Activated CD4-positive, alpha-beta T cell treated with anti-CD3 and anti-CD28 coated beads for 36 hours (primary cell): ENCODE measurements at regions of chr1 and their contacts with region 1.

Region 1: GRCh38 chr1:160261893-160262794 is at the start of gene DCAF8:
- DNase-seq: peak; percentile 99
- ATAC-seq: peak; percentile 88
- H3K4me3 Mint-ChIP-seq: peak within 1 kb of the TSS; percentile 100
- H3K27ac Mint-ChIP-seq: peak within 1 kb of the TSS; percentile 99
- H3K4me1 Mint-ChIP-seq: peaks cover 44% of the 10 kb centered on the region
- H3K27me3 Mint-ChIP-seq: no peaks in the 10 kb centered on the region
- total RNA-seq, gene DCAF8: 116 to 135 TPM

Region 2: DNA sequence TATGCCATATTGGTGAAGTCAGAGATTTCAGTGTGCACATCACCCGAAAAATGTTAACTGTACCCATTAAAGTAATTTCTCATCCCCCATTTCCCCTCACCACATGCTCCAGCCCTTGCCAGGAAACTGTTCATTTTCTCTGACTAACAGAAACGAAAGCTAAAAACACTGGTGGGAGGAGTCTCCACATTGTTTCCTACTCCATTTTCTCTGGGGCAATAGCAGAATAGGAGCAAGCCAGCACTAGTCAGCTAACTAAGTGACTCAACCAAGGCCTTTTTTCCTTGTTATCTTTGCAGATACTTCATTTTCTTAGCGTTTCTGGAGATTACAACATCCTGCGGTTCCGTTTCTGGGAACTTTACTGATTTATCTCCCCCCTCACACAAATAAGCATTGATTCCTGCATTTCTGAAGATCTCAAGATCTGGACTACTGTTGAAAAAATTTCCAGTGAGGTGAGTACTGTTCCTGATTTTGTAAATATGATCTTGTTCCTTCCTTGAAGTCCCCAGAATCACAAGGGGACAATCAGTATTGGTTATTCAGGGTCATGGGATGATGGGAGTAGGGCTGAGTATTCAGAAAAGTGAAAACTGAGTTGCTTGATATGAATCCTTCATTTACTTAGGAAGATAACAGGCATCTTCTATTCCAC is 1252.3 kb before region 1 on chr1 and contains the start of gene IFI16:
- CTCF ChIA-PET with region 1: no interaction called
- POLR2A ChIA-PET with region 1: no interaction called
- intact Hi-C with region 1: loop called in 1 of 2 experiments (anchors 5 kb)
- DNase-seq: peak; percentile 75
- ATAC-seq: peak; percentile 70
- H3K4me3 Mint-ChIP-seq: peak within 1 kb of the TSS; percentile 82
- H3K27ac Mint-ChIP-seq: peak within 1 kb of the TSS; percentile 97
- H3K4me1 Mint-ChIP-seq: peaks cover 43% of the 10 kb centered on the region
- H3K27me3 Mint-ChIP-seq: no peaks in the 10 kb centered on the region
- total RNA-seq, gene IFI16: 263 to 308 TPM

Region 3: GRCh38 chr1:160031365-160032164 is 230.6 kb before region 1 on chr1 and contains the start of gene PIGM:
- CTCF ChIA-PET with region 1: no interaction called
- POLR2A ChIA-PET with region 1: no interaction called
- intact Hi-C with region 1: loop called in 1 of 2 experiments (anchors 2 kb)
- DNase-seq: peak; percentile 97
- ATAC-seq: peak; percentile 96
- H3K4me3 Mint-ChIP-seq: peak within 1 kb of the TSS; percentile 96
- H3K27ac Mint-ChIP-seq: peak within 1 kb of the TSS; percentile 92
- H3K4me1 Mint-ChIP-seq: peaks cover 34% of the 10 kb centered on the region
- H3K27me3 Mint-ChIP-seq: no peaks in the 10 kb centered on the region
- total RNA-seq, gene PIGM: 4.3 to 4.7 TPM

Region 4: GRCh38 chr1:160284782-160285344 is 22.7 kb after region 1 on chr1 and contains the start of gene PEX19:
- CTCF ChIA-PET with region 1: interaction called, 11 read pairs
- POLR2A ChIA-PET with region 1: interaction called, 15 read pairs
- intact Hi-C with region 1: loop called (anchors 1 kb)
- DNase-seq: peak; percentile 97
- ATAC-seq: peak; percentile 99
- H3K4me3 Mint-ChIP-seq: peak within 1 kb of the TSS; percentile 86
- H3K27ac Mint-ChIP-seq: peak within 1 kb of the TSS; percentile 94
- H3K4me1 Mint-ChIP-seq: peaks cover 18% of the 10 kb centered on the region
- H3K27me3 Mint-ChIP-seq: no peaks in the 10 kb centered on the region
- total RNA-seq, gene PEX19: 49.2 to 55.8 TPM

Region 5: DNA sequence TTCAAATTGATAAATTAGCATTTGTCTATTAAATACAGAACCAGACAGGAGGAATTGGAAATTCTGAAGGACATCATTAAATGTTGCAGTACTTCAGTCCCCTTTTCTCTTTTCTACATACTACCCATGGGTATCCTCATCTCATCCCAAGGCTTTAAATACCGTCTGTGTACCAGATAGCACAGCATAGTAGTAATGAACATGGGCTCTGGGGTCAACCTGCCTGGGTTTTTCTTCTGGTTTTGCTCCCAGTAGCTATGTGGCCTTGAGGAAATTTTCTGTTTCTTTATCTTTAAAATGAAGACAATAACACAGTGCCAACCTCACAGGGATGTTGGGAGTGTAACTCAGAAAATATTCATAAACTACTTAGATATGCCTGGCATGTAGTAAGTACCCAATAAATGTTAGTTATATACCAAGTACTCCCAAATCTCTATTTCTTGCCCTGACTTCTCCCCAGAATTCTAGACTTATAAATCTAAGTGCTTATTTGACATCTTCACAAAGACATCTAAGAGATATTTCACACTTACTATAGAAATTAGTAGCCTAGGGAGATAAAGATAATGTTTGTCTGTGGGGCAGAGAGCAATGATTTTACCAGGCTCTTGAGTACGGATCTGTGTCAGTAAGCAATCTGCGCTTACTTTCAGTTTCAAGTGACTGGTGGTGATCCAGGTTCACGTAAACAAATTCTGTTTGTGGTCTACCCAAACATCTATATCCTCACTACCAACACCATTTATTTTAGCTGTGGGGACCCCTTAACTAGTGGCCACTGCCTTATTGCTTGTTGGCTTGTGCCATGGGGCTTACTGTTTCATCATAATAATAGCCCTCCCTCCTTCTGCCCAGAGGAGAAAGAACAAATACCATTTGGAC is 175.5 kb after region 1 on chr1:
- CTCF ChIA-PET with region 1: no interaction called
- POLR2A ChIA-PET with region 1: no interaction called
- intact Hi-C with region 1: no loop called
- DNase-seq: no peak
- ATAC-seq: peak; percentile 96
- H3K4me3 Mint-ChIP-seq: peak overlapping the region; percentile 63
- H3K27ac Mint-ChIP-seq: peak overlapping the region; percentile 96
- H3K4me1 Mint-ChIP-seq: peaks cover 40% of the 10 kb centered on the region
- H3K27me3 Mint-ChIP-seq: no peaks in the 10 kb centered on the region

Region 6: GRCh38 chr1:160519642-160520435 is 257.7 kb after region 1 on chr1:
- CTCF ChIA-PET with region 1: no interaction called
- POLR2A ChIA-PET with region 1: no interaction called
- intact Hi-C with region 1: loop called in 1 of 2 experiments (anchors 2 kb)
- DNase-seq: peak; percentile 54
- ATAC-seq: peak; percentile 70
- H3K4me3 Mint-ChIP-seq: peak overlapping the region; percentile 97
- H3K27ac Mint-ChIP-seq: peak overlapping the region; percentile 98
- H3K4me1 Mint-ChIP-seq: peaks cover 83% of the 10 kb centered on the region
- H3K27me3 Mint-ChIP-seq: no peaks in the 10 kb centered on the region

Region 7: DNA sequence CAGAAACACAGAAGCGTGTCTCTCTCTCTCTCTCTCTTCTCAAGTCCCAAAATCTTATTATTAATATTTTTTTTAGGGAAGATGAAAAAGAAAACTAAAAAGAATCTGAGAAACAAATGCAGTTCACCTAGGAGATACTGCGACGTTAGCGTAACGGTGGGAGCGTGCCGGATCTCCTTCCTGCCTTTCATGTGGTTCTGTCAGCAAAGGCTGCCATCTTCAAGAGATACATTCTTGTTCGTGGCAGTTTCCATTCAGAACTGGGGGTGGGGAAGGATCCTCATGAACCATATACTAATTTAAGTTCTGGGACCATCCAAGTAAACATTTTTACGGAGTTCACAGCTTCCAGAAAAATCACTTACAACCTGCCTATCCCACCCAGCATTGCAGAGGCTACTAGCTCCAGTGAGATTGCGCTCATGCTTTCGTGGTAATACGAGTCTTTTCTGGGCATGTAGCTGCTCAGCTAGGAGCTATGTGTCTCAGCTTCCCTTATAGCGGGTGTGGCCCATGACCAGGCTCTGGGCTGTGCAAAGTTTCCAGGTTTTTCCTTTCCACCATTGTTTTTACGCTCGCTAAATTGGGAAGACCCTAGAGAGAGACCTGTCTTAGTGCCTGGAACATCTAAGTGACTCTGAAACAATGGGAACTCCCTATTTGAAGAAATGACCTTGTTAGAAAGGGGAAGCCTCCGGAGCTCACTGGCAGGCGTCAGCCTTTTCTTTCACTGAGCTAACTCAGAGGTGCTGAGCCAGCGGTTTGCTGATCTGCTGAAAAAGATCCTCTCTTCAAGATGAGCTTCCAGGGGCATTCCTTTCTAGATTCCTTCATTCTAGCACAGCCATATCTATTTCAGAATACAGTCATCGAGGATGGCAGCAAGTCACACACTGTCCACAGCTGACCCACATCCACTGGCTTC is 367.4 kb after region 1 on chr1:
- CTCF ChIA-PET with region 1: interaction called, 3 read pairs
- POLR2A ChIA-PET with region 1: no interaction called
- intact Hi-C with region 1: loop called (anchors 5 kb)
- DNase-seq: peak; percentile 83
- ATAC-seq: peak; percentile 22
- H3K4me3 Mint-ChIP-seq: peak overlapping the region; percentile 65
- H3K27ac Mint-ChIP-seq: peak overlapping the region; percentile 99
- H3K4me1 Mint-ChIP-seq: peaks cover 97% of the 10 kb centered on the region
- H3K27me3 Mint-ChIP-seq: no peaks in the 10 kb centered on the region